CD8-positive, alpha-beta T cell (primary cell): ENCODE measurements at regions of chr16 and their contacts with region 1.

Region 1: GRCh38 chr16:1610276-1611017 is 1.4 kb downstream of the IFT140 start:
- DNase-seq: peak; percentile 85 to 94 (median 92)
- ATAC-seq: peak; percentile 56
- H3K4me3 ChIP-seq: peak overlapping the region; percentile 48 to 83
- H3K4me3 Mint-ChIP-seq: peak overlapping the region; percentile 83
- H3K27ac ChIP-seq: peak overlapping the region; percentile 48 to 64
- H3K27ac Mint-ChIP-seq: peak overlapping the region; percentile 49
- H3K4me1 ChIP-seq: peaks cover 34% of the 10 kb centered on the region
- H3K4me1 Mint-ChIP-seq: peaks cover 25% of the 10 kb centered on the region
- H3K27me3 ChIP-seq: peaks cover 2 to 4% of the 10 kb centered on the region in 2 experiments
- H3K27me3 Mint-ChIP-seq: peaks cover 6% of the 10 kb centered on the region
- CTCF ChIP-seq: no peak

Region 2: DNA sequence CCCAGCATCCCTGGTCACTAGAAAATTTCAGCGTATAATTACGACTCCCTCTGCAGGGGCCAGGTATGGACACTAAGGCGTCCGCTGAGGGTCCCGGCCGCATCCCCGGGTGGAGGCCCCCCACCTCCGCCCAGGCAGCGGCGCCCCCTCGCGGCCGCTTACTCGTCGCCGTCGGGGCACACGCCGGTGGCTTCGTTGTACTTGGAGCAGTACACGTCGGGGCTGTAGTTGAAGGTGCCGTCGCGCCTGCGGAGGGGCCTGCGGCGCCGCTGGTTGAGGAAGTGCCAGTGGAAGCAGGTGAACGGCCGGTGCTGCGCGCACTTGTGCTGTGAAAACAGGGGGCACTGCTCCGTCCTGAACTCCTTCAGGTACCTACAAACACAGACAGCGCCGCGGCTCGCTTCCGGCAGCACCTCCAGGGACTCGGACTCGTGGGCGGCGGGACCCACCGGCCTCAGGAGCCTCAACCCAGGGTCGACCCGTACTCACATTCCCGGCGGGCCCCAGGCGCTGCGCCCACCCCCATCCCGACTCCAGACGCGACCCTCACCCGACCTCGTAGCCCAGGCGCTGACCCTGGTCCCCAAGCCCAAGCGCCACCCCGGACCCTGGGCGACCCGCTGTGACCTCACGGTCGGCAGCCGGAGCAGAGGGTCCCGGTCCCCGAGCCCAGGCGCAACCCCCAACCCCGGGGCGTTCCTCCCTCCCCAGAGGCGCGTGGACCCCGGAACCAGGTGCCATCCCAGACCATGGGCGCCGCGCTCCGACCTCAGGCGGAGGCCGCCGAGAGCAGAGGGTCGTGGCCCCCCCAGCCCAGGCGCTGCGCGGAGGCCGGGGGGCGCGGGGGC is 196.5 kb before region 1 on chr16:
- CTCF ChIA-PET with region 1: no interaction called
- POLR2A ChIA-PET with region 1: no interaction called
- intact Hi-C with region 1: loop called in 1 of 2 experiments (anchors 2 kb)
- DNase-seq: peak; percentile 44 to 82 (median 69)
- ATAC-seq: peak; percentile 55
- H3K4me3 ChIP-seq: peak overlapping the region; percentile 64 to 85
- H3K4me3 Mint-ChIP-seq: peak overlapping the region; percentile 85
- H3K27ac ChIP-seq: peak overlapping the region; percentile 69 to 73
- H3K27ac Mint-ChIP-seq: peak overlapping the region; percentile 89
- H3K4me1 ChIP-seq: peaks cover 17% of the 10 kb centered on the region
- H3K4me1 Mint-ChIP-seq: peaks cover 37% of the 10 kb centered on the region
- H3K27me3 ChIP-seq: no peaks in the 10 kb centered on the region
- H3K27me3 Mint-ChIP-seq: no peaks in the 10 kb centered on the region
- CTCF ChIP-seq: peak; percentile 62

Region 3: DNA sequence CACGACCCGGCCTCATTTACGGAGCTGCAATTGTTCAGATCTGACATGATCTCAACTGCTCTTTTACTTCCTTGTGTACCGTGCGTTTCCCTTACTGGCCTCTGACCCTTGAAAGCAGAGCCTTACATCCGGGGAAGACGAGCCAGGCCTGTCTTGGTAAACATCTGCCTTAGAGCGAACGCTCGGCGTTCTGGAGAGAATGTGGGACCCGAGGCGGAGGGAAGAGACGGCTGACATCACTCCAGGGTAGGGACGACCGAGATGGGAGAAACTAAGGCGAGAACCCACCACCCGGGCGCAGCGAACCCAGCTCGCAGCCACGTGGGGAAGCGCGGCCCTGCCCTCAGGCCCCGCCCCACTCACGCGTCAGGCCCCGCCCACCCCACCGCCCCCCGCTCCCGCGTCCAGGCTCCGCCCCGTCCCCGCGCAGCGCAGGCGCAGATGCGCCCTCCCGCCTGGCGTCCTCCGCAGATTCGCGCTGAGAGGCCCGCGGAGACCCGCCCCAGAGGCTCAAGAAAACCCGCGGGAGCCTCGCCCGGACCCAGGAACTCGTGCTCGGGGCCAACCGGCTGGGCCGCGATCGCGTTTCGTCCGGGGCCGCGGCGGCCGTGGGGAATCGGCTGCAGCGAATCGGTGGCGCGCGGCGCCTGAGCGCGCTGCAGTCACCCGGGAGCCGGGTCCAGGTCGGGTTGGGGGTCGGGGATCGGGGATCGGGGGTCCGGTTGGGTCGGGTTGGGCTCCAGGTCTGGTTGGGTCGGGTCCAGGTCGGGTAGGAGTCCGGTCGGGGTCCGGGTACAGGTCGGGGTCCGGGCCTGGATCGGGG is 117.3 kb before region 1 on chr16 and contains the start of gene TELO2:
- CTCF ChIA-PET with region 1: no interaction called
- POLR2A ChIA-PET with region 1: no interaction called
- intact Hi-C with region 1: loop called (anchors 1 kb)
- DNase-seq: peak; percentile 75 to 93 (median 85)
- ATAC-seq: peak; percentile 94
- H3K4me3 ChIP-seq: peak within 1 kb of the TSS; percentile 68 to 87
- H3K4me3 Mint-ChIP-seq: peak within 1 kb of the TSS; percentile 95
- H3K27ac ChIP-seq: peak within 1 kb of the TSS; percentile 93 to 96
- H3K27ac Mint-ChIP-seq: peak within 1 kb of the TSS; percentile 100
- H3K4me1 ChIP-seq: peaks cover 16% of the 10 kb centered on the region
- H3K4me1 Mint-ChIP-seq: peaks cover 11% of the 10 kb centered on the region
- H3K27me3 ChIP-seq: no peaks in the 10 kb centered on the region
- H3K27me3 Mint-ChIP-seq: no peaks in the 10 kb centered on the region
- CTCF ChIP-seq: no peak
- total RNA-seq, gene TELO2: 23.0 to 23.6 TPM

Region 4: DNA sequence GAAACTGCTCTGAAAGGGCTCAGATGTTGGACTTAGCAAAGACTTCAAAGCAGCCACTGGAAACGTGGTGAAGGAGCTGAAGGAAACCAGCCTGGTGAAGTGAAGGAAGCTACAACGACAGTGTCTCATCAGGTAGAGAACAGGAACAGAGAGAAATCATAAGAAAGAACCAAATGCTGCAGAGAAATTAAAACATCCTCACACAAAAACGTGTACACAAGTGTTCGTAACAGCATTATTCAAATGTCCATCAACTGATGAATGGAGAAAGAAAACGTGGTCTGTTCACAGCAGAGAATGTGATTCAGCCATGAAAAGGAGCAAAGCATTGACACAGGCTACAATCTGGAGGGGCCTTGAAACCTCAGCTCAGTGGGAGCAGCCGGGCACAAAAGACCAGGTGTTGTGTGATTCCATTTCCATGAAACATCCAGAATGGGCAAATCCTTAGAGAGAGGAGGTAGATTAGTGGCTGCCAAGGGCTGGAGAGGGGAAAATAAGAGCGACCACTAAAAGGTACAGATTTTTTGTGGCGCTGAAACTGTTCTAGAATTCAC is 25.4 kb before region 1 on chr16:
- CTCF ChIA-PET with region 1: no interaction called
- POLR2A ChIA-PET with region 1: no interaction called
- intact Hi-C with region 1: no loop called
- DNase-seq: no peak
- ATAC-seq: no peak
- H3K4me3 ChIP-seq: no peak overlapping the region
- H3K4me3 Mint-ChIP-seq: no peak overlapping the region
- H3K27ac ChIP-seq: no peak overlapping the region
- H3K27ac Mint-ChIP-seq: peak overlapping the region; percentile 32
- H3K4me1 ChIP-seq: no peaks in the 10 kb centered on the region
- H3K4me1 Mint-ChIP-seq: no peaks in the 10 kb centered on the region
- H3K27me3 ChIP-seq: no peaks in the 10 kb centered on the region
- H3K27me3 Mint-ChIP-seq: no peaks in the 10 kb centered on the region
- CTCF ChIP-seq: no peak

Region 5: GRCh38 chr16:1645914-1646525 is 35.6 kb after region 1 on chr16:
- CTCF ChIA-PET with region 1: interaction called, 3 read pairs
- POLR2A ChIA-PET with region 1: no interaction called
- intact Hi-C with region 1: loop called in 1 of 2 experiments (anchors 2 kb)
- DNase-seq: peak in 7 of 9 experiments; percentile 17 to 69 (median 49)
- ATAC-seq: peak; percentile 62
- H3K4me3 ChIP-seq: no peak overlapping the region
- H3K4me3 Mint-ChIP-seq: no peak overlapping the region
- H3K27ac ChIP-seq: no peak overlapping the region
- H3K27ac Mint-ChIP-seq: peak overlapping the region; percentile 58
- H3K4me1 ChIP-seq: peaks cover 7% of the 10 kb centered on the region
- H3K4me1 Mint-ChIP-seq: peaks cover 15% of the 10 kb centered on the region
- H3K27me3 ChIP-seq: no peaks in the 10 kb centered on the region
- H3K27me3 Mint-ChIP-seq: no peaks in the 10 kb centered on the region
- CTCF ChIP-seq: no peak

Region 6: DNA sequence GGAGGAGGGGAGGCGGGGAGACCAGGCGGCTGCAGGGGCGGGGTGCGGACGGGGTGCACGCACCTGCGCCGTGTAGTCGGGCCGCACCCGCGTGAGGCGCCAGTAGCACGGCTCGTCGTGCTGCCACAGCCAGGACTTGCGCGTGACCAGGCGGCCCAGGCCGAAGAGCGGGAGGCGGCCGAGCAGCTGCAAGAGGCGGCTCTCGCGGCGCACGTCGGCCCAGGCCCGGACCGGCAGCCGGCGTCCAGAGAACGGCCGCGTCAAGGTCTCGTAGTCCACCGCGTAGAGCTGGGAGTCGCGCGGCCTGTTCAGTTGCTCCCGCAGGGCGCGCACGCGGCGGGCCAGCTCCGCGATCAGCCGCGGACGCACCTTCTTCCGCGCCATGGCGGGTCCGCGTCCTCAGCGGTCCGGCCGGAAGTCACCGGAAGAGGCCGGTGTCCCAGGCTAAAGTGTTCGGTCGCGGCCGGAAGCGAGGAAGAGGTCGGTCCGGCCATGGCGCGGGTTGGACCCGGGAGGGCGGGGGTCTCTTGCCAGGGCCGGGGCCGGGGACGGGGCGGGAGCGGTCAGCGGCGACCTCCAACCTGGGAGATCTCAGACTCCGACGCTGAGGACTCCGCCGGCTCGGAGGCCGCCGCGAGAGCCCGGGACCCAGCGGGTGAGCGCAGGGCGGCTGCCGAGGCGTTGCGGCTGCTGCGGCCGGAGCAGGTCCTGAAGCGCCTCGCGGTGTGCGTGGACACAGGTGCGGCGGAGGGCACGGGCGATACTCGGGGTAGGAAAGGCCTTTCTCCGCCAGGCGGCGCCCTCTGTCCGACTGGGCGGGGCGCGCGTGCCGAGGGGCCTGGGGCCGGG is 162.5 kb after region 1 on chr16 and contains the starts of genes EME2 and MRPS34:
- CTCF ChIA-PET with region 1: no interaction called
- POLR2A ChIA-PET with region 1: interaction called, 3 read pairs
- intact Hi-C with region 1: loop called in 1 of 2 experiments (anchors 2 kb)
- DNase-seq: peak; percentile 54 to 89 (median 78)
- ATAC-seq: peak; percentile 48
- H3K4me3 ChIP-seq: peak within 1 kb of the TSS; percentile 79 to 91
- H3K4me3 Mint-ChIP-seq: peak within 1 kb of the TSS; percentile 96
- H3K27ac ChIP-seq: peak within 1 kb of the TSS; percentile 57 to 66
- H3K27ac Mint-ChIP-seq: peak within 1 kb of the TSS; percentile 96
- H3K4me1 ChIP-seq: peaks cover 30% of the 10 kb centered on the region
- H3K4me1 Mint-ChIP-seq: peaks cover 19% of the 10 kb centered on the region
- H3K27me3 ChIP-seq: no peaks in the 10 kb centered on the region
- H3K27me3 Mint-ChIP-seq: no peaks in the 10 kb centered on the region
- CTCF ChIP-seq: peak; percentile 92
- total RNA-seq, gene EME2: 27.5 to 31.7 TPM
- total RNA-seq, gene MRPS34: 18.9 to 21.4 TPM

Region 7: DNA sequence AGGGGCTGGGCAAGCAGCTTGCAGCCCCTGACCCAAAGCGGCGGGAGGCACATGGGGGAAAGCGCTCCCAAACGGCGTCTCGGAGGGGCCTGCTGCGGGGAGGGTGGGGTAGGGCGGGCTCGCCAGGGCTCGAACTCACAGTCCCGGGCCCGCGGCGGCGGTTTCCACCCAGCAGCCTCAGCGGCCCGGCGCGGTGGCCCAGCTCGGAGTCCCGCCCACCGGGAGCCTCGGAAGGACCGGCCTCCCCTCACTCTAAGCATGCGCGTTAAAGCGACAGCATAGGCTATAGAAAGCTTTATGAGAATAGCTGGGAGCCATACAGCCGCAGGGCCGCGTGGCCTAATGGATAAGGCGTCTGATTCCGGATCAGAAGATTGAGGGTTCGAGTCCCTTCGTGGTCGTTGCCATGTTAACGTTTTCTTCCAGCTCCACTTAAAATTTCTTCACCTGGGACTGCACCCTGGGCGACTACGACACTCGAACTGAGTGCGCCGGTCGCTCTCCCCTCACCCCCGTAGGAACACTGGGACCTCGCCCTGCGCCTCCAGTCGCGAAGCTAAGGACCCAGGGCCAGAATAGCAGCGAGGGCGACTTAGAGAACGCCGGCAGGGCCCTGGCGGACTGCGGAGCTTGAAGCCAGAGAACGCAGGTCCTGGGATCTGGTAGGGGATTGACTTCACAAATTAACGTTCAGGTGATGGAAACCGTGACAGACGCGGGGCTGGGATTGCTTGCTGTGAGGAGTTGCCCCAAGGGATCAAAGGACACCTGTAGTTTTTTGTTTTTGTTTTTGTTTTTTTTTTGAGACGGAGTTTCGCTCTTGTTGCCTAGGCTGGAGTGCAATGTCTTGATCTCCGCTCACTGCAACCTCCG is 1540.1 kb after region 1 on chr16:
- CTCF ChIA-PET with region 1: no interaction called
- POLR2A ChIA-PET with region 1: no interaction called
- intact Hi-C with region 1: loop called in 1 of 2 experiments (anchors 5 kb)
- DNase-seq: peak; percentile 94 to 100 (median 97)
- ATAC-seq: peak; percentile 82
- H3K4me3 ChIP-seq: peak overlapping the region; percentile 53 to 93
- H3K4me3 Mint-ChIP-seq: peak overlapping the region; percentile 88
- H3K27ac ChIP-seq: peak overlapping the region; percentile 53 to 68
- H3K27ac Mint-ChIP-seq: peak overlapping the region; percentile 88
- H3K4me1 ChIP-seq: peaks cover 23% of the 10 kb centered on the region
- H3K4me1 Mint-ChIP-seq: peaks cover 27% of the 10 kb centered on the region
- H3K27me3 ChIP-seq: no peaks in the 10 kb centered on the region
- H3K27me3 Mint-ChIP-seq: no peaks in the 10 kb centered on the region
- CTCF ChIP-seq: no peak